B cell (primary cell): ENCODE measurements at regions of chr3 and their contacts with region 1.

Region 1: GRCh38 chr3:186617038-186617946 is 4.4 kb downstream of the AHSG start:
- DNase-seq: peak; percentile 86
- ATAC-seq: peak; percentile 95
- H3K4me3 ChIP-seq: peak overlapping the region in 2 of 5 experiments; percentile 29 to 30
- H3K4me3 Mint-ChIP-seq: peak overlapping the region; percentile 74
- H3K27ac ChIP-seq: no peak overlapping the region
- H3K27ac Mint-ChIP-seq: no peak overlapping the region
- H3K4me1 ChIP-seq: peaks cover 19% of the 10 kb centered on the region in 2 donors
- H3K4me1 Mint-ChIP-seq: peaks cover 13% of the 10 kb centered on the region
- H3K27me3 ChIP-seq: peaks cover 0 to 35% (median 9%) of the 10 kb centered on the region in 4 experiments
- H3K27me3 Mint-ChIP-seq: peaks cover 58% of the 10 kb centered on the region
- CTCF ChIP-seq: peak; percentile 95

Region 2: GRCh38 chr3:185983495-185984141 is 633.7 kb before region 1 on chr3:
- CTCF ChIA-PET with region 1: interaction called, 166 read pairs
- POLR2A ChIA-PET with region 1: no interaction called
- intact Hi-C with region 1: loop called (anchors 1 kb)
- DNase-seq: peak; percentile 77
- ATAC-seq: peak; percentile 84
- H3K4me3 ChIP-seq: no peak overlapping the region
- H3K4me3 Mint-ChIP-seq: no peak overlapping the region
- H3K27ac ChIP-seq: no peak overlapping the region
- H3K27ac Mint-ChIP-seq: no peak overlapping the region
- H3K4me1 ChIP-seq: peaks cover 6 to 8% of the 10 kb centered on the region in 2 donors
- H3K4me1 Mint-ChIP-seq: no peaks in the 10 kb centered on the region
- H3K27me3 ChIP-seq: peaks cover 0 to 16% (median 2%) of the 10 kb centered on the region in 4 experiments
- H3K27me3 Mint-ChIP-seq: peaks cover 10% of the 10 kb centered on the region
- CTCF ChIP-seq: peak; percentile 94

Region 3: GRCh38 chr3:186570096-186570940 is 47.0 kb before region 1 on chr3 and contains the start of gene DNAJB11:
- CTCF ChIA-PET with region 1: interaction called, 7 read pairs
- POLR2A ChIA-PET with region 1: no interaction called
- intact Hi-C with region 1: loop called (anchors 2 kb)
- DNase-seq: peak; percentile 99
- ATAC-seq: peak; percentile 85
- H3K4me3 ChIP-seq: peak within 1 kb of the TSS; percentile 86 to 98 (median 90)
- H3K4me3 Mint-ChIP-seq: peak within 1 kb of the TSS; percentile 98
- H3K27ac ChIP-seq: peak within 1 kb of the TSS; percentile 91 to 96
- H3K27ac Mint-ChIP-seq: peak within 1 kb of the TSS; percentile 98
- H3K4me1 ChIP-seq: peaks cover 28 to 40% of the 10 kb centered on the region in 2 donors
- H3K4me1 Mint-ChIP-seq: peaks cover 51% of the 10 kb centered on the region
- H3K27me3 ChIP-seq: no peaks in the 10 kb centered on the region
- H3K27me3 Mint-ChIP-seq: no peaks in the 10 kb centered on the region
- CTCF ChIP-seq: no peak
- total RNA-seq, gene DNAJB11: 27.7 and 28.5 TPM in 2 replicates

Region 4: DNA sequence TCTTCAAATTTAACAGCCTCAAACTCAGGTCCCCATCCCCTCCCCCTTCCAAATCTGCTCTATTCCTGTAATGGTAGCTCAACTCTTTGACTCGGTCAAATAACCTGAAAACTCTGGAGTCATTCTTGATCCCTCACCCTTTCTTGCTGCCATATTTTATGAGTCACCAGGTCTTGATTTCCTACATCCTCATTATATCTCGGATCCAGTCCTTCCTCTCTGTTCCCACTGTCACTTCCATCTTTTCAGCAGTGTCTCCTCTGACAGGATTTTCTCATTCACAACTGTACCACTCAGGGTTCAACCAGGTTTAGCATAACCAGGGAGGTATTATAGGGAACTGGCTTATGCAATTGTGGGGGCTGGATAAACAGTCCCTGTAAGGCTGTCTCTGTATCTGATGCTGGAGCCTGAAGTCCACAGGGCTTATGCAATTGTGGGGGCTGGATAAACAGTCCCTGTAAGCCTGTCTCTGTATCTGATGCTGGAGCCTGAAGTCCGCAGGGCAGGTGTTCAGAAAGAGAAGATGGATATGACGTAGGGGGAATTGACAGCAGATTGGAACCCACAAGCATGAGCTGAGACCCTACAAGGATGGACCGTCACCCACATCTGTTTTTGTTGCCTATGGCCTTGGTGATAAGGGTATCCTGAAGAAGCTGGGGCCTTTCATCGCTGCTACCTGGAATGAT is 13.8 kb after region 1 on chr3:
- CTCF ChIA-PET with region 1: interaction called, 43 read pairs
- POLR2A ChIA-PET with region 1: no interaction called
- intact Hi-C with region 1: no loop called
- DNase-seq: no peak
- ATAC-seq: no peak
- H3K4me3 ChIP-seq: no peak overlapping the region
- H3K4me3 Mint-ChIP-seq: no peak overlapping the region
- H3K27ac ChIP-seq: no peak overlapping the region
- H3K27ac Mint-ChIP-seq: no peak overlapping the region
- H3K4me1 ChIP-seq: no peaks in the 10 kb centered on the region
- H3K4me1 Mint-ChIP-seq: no peaks in the 10 kb centered on the region
- H3K27me3 ChIP-seq: no peaks in the 10 kb centered on the region
- H3K27me3 Mint-ChIP-seq: peaks cover 15% of the 10 kb centered on the region
- CTCF ChIP-seq: no peak

Region 5: GRCh38 chr3:186751480-186751879 is 134.2 kb after region 1 on chr3:
- CTCF ChIA-PET with region 1: interaction called, 15 read pairs
- POLR2A ChIA-PET with region 1: no interaction called
- intact Hi-C with region 1: no loop called
- DNase-seq: no peak
- ATAC-seq: no peak
- H3K4me3 ChIP-seq: no peak overlapping the region
- H3K4me3 Mint-ChIP-seq: no peak overlapping the region
- H3K27ac ChIP-seq: no peak overlapping the region
- H3K27ac Mint-ChIP-seq: no peak overlapping the region
- H3K4me1 ChIP-seq: no peaks in the 10 kb centered on the region
- H3K4me1 Mint-ChIP-seq: peaks cover 5% of the 10 kb centered on the region
- H3K27me3 ChIP-seq: no peaks in the 10 kb centered on the region
- H3K27me3 Mint-ChIP-seq: peaks cover 9% of the 10 kb centered on the region
- CTCF ChIP-seq: no peak

Region 6: GRCh38 chr3:186806089-186807055 is 189.1 kb after region 1 on chr3 and contains the start of gene RFC4:
- CTCF ChIA-PET with region 1: interaction called, 7 read pairs
- POLR2A ChIA-PET with region 1: no interaction called
- intact Hi-C with region 1: loop called (anchors 5 kb)
- DNase-seq: peak; percentile 88
- ATAC-seq: peak; percentile 91
- H3K4me3 ChIP-seq: peak within 1 kb of the TSS; percentile 78 to 96 (median 90)
- H3K4me3 Mint-ChIP-seq: peak within 1 kb of the TSS; percentile 99
- H3K27ac ChIP-seq: peak within 1 kb of the TSS; percentile 78 to 86
- H3K27ac Mint-ChIP-seq: peak within 1 kb of the TSS; percentile 97
- H3K4me1 ChIP-seq: peaks cover 15 to 19% of the 10 kb centered on the region in 2 donors
- H3K4me1 Mint-ChIP-seq: peaks cover 20% of the 10 kb centered on the region
- H3K27me3 ChIP-seq: no peaks in the 10 kb centered on the region
- H3K27me3 Mint-ChIP-seq: no peaks in the 10 kb centered on the region
- CTCF ChIP-seq: no peak
- total RNA-seq, gene RFC4: 17.8 and 21.0 TPM in 2 replicates

Region 7: GRCh38 chr3:187164885-187165543 is 547.7 kb after region 1 on chr3:
- CTCF ChIA-PET with region 1: interaction called, 37 read pairs
- POLR2A ChIA-PET with region 1: no interaction called
- intact Hi-C with region 1: loop called (anchors 5 kb)
- DNase-seq: peak; percentile 81
- ATAC-seq: peak; percentile 72
- H3K4me3 ChIP-seq: no peak overlapping the region
- H3K4me3 Mint-ChIP-seq: no peak overlapping the region
- H3K27ac ChIP-seq: no peak overlapping the region
- H3K27ac Mint-ChIP-seq: no peak overlapping the region
- H3K4me1 ChIP-seq: no peaks in the 10 kb centered on the region
- H3K4me1 Mint-ChIP-seq: no peaks in the 10 kb centered on the region
- H3K27me3 ChIP-seq: peaks cover 0 to 6% (median 0%) of the 10 kb centered on the region in 4 experiments
- H3K27me3 Mint-ChIP-seq: peaks cover 23% of the 10 kb centered on the region
- CTCF ChIP-seq: peak; percentile 81